H1 (cell line): ENCODE measurements at regions of chr1 and their contacts with region 1.

Region 1: GRCh38 chr1:1943834-1944570 is 24.9 kb upstream of the TMEM52 start:
- DNase-seq: peak in 1 of 2 experiments; percentile 91
- H3K4me3 ChIP-seq: peak overlapping the region in 3 of 4 experiments; percentile 28 to 46 (median 42); a peak in 5 of 8 replicates
- H3K27ac ChIP-seq: no peak overlapping the region
- H3K4me1 ChIP-seq: peaks cover 0 to 2% (median 0%) of the 10 kb centered on the region in 4 experiments; a peak in 2 of 7 replicates
- H3K27me3 ChIP-seq: no peaks in the 10 kb centered on the region
- CTCF ChIP-seq: peak in 2 of 3 experiments; percentile 70 to 88; a peak in 3 of 4 replicates
- EP300 ChIP-seq: no peak
- POLR2A ChIP-seq: no peak
- RAD21 ChIP-seq: peak; percentile 46 to 57

Region 2: GRCh38 chr1:1929639-1930471 is 14.1 kb before region 1 on chr1:
- CTCF ChIA-PET with region 1: interaction called, 21 read pairs
- POLR2A ChIA-PET with region 1: interaction called, 4 read pairs
- DNase-seq: no peak
- H3K4me3 ChIP-seq: no peak overlapping the region
- H3K27ac ChIP-seq: no peak overlapping the region
- H3K4me1 ChIP-seq: no peaks in the 10 kb centered on the region
- H3K27me3 ChIP-seq: no peaks in the 10 kb centered on the region; a peak in 1 of 7 replicates
- CTCF ChIP-seq: no peak
- EP300 ChIP-seq: no peak
- POLR2A ChIP-seq: no peak
- RAD21 ChIP-seq: no peak

Region 3: GRCh38 chr1:1959840-1960479 is 16.0 kb after region 1 on chr1:
- CTCF ChIA-PET with region 1: interaction called, 64 read pairs
- POLR2A ChIA-PET with region 1: no interaction called
- DNase-seq: peak; percentile 80 to 97
- H3K4me3 ChIP-seq: peak overlapping the region in 2 of 4 experiments; percentile 13 to 52; a peak in 3 of 8 replicates
- H3K27ac ChIP-seq: no peak overlapping the region
- H3K4me1 ChIP-seq: peaks cover 0 to 12% (median 10%) of the 10 kb centered on the region in 4 experiments; a peak in 6 of 7 replicates
- H3K27me3 ChIP-seq: no peaks in the 10 kb centered on the region; a peak in 1 of 7 replicates
- CTCF ChIP-seq: peak; percentile 89 to 98 (median 96)
- EP300 ChIP-seq: no peak; a peak in 1 of 3 replicates
- POLR2A ChIP-seq: no peak
- RAD21 ChIP-seq: peak; percentile 78 to 86

Region 4: GRCh38 chr1:1973716-1974642 is 30.0 kb after region 1 on chr1:
- CTCF ChIA-PET with region 1: interaction called, 16 read pairs
- POLR2A ChIA-PET with region 1: interaction called, 3 read pairs
- DNase-seq: no peak
- H3K4me3 ChIP-seq: no peak overlapping the region
- H3K27ac ChIP-seq: no peak overlapping the region
- H3K4me1 ChIP-seq: no peaks in the 10 kb centered on the region
- H3K27me3 ChIP-seq: no peaks in the 10 kb centered on the region
- CTCF ChIP-seq: no peak
- EP300 ChIP-seq: no peak
- POLR2A ChIP-seq: no peak
- RAD21 ChIP-seq: no peak